Breast epithelium (tissue), 4 donors: ENCODE measurements at regions of chr1 and their contacts with region 1.

Region 1: GRCh38 chr1:154718566-154718965 is 110.6 kb upstream of the ADAR start:
- DNase-seq: no peak
- H3K4me3 ChIP-seq: no peak overlapping the region
- H3K27ac ChIP-seq: no peak overlapping the region
- H3K4me1 ChIP-seq: no peaks in the 10 kb centered on the region
- H3K27me3 ChIP-seq: no peaks in the 10 kb centered on the region
- CTCF ChIP-seq: no peak
- POLR2A ChIP-seq: no peak

Region 2: DNA sequence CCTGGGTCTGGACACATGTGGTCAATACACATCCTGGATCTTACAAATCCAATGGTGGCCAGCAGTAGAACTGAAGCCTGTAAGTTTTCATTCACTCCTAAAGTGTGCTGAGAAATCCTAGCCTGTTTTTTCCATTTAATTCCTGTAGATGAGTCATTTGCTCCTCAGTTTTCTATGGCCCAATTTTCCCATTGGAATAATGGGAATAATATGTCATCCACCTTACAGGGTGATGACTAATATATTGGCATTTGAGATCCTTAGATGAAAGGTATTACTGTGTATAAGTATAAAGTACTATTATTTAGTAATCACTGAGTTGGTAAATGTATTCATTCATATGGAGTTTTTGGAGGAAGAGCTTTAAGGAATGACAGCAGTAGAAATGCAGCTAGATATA is 20.9 kb before region 1 on chr1:
- intact Hi-C with region 1: loop called (anchors 1 kb)
- DNase-seq: no peak
- H3K4me3 ChIP-seq: no peak overlapping the region
- H3K27ac ChIP-seq: no peak overlapping the region
- H3K4me1 ChIP-seq: no peaks in the 10 kb centered on the region
- H3K27me3 ChIP-seq: no peaks in the 10 kb centered on the region
- CTCF ChIP-seq: no peak
- POLR2A ChIP-seq: no peak